Tibial artery (tissue), 4 donors: ENCODE measurements at regions of chr22 and their contacts with region 1.

Region 1: DNA sequence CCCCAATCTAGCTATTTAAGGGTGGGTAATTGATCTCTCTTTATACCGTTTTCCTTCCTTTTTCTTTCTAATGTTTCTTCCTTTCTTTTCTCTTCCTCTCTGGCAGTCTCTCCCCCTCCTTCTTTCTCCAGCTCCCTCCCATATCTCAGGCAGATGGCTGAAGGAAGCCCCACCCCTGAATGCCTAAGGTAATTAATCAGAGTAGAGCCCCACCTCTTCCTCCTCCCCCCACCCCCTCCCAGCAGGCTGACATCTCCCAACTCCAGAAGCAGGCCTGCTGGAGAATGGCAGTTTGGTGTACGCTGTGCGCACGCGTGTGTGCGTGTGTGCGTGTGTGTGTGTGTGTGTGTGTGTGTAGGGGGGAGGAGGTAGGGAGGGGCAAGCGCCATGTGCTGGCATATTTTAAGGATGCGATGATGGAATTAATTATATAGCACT is 122.6 kb downstream of the APOL5 start:
- DNase-seq: peak; percentile 83 to 90
- H3K4me3 ChIP-seq: peak overlapping the region; percentile 48 to 57
- H3K27ac ChIP-seq: peak overlapping the region; percentile 64 to 66
- H3K4me1 ChIP-seq: peaks cover 0 to 63% (median 26%) of the 10 kb centered on the region in 4 donors
- H3K27me3 ChIP-seq: no peaks in the 10 kb centered on the region
- CTCF ChIP-seq: no peak

Region 2: DNA sequence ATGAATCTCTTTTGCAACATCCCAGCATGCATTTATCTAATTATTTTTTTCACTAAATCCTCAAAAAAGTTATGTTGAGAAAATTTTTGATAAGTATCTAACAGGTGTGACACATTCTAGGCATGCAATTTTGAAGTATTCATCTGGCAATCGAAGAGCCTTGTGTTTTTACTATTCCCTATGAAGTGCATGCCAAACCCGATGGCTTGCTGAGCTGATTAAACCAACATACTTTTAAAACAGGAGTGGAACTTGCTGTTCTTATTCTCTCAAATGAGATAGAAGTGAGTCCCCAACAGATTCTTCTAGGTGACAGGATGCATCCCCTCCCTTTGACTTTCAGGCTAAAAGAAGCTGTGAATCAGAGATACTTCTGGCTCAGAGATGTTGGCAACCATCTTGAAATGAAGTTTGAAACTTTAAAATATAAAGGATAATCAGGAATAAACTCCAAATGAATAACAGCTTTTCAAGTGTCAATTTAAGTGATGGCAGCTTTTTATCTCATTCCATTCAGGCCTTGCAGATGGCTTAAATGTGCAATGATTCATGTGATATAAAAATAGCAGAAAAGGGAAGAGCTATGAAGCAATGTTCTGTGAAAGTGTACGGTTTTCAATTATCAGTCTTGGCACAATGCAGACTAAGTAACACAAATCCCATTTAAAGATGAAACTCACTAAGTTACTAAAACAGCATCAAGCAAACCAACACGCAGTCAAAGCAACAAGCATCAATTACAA is 55.0 kb before region 1 on chr22:
- intact Hi-C with region 1: loop called (anchors 10 kb)
- DNase-seq: no peak
- H3K4me3 ChIP-seq: no peak overlapping the region
- H3K27ac ChIP-seq: no peak overlapping the region
- H3K4me1 ChIP-seq: peaks cover 0 to 53% (median 26%) of the 10 kb centered on the region in 4 donors
- H3K27me3 ChIP-seq: no peaks in the 10 kb centered on the region
- CTCF ChIP-seq: no peak

Region 3: GRCh38 chr22:35894937-35895708 is 54.8 kb after region 1 on chr22:
- intact Hi-C with region 1: loop called (anchors 10 kb)
- DNase-seq: peak; percentile 47 to 77
- H3K4me3 ChIP-seq: peak overlapping the region; percentile 53 to 55
- H3K27ac ChIP-seq: peak overlapping the region; percentile 80 to 84
- H3K4me1 ChIP-seq: peaks cover 5 to 44% (median 30%) of the 10 kb centered on the region in 4 donors
- H3K27me3 ChIP-seq: no peaks in the 10 kb centered on the region
- CTCF ChIP-seq: no peak

Region 4: DNA sequence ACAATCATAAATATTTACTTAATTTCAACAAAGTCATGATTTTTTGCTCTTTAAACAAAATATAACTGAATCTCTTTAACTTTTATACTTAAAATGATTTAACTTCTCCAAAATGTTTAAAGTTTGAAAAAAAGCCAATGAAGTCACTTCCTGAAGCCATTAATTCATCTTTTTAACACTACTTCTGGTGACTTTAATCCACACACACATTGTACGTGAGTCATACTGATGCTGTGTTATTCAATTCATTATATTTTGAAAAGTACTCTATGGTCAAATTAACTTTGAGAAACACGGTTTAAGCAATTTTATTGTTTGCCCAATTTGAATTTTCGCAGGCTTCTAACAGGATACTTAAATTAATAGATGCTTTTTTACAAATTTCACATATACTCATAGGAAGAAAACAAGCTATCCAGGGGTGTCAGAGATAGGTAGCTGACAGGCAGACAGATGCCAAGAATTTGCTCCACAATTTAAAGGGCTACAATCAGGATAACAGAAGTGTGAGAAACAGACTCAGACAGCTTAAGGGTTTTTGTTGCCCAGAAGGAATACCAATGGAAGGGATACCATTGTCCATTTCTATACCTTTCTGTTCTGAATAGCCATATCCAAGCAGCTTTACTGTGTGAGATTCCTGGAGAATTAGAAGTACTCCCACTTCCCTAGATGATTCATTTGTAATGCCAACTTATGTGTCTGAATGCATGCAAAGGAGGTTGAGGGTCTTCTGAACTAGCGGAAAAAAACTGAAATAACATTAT is 69.9 kb after region 1 on chr22:
- intact Hi-C with region 1: no loop called
- DNase-seq: no peak
- H3K4me3 ChIP-seq: no peak overlapping the region
- H3K27ac ChIP-seq: no peak overlapping the region
- H3K4me1 ChIP-seq: peaks cover 0 to 32% (median 11%) of the 10 kb centered on the region in 4 donors
- H3K27me3 ChIP-seq: no peaks in the 10 kb centered on the region
- CTCF ChIP-seq: no peak